ENCODE measurements at regions of chr15 and their contacts with region 1.

Region 1: GRCh38 chr15:90031231-90031791 is 30.2 kb downstream of the ZNF710 start:
- DNase-seq: peak; percentile 60 to 85 (median 82)
- H3K4me3 ChIP-seq: peak overlapping the region in 1 of 3 experiments; percentile 19
- H3K4me3 Mint-ChIP-seq: peak overlapping the region; percentile 41 to 69
- H3K27ac ChIP-seq: peak overlapping the region; percentile 76 to 97
- H3K27ac Mint-ChIP-seq: peak overlapping the region; percentile 79 to 94 (median 90)
- H3K4me1 ChIP-seq: peaks cover 80 to 85% of the 10 kb centered on the region in 2 donors
- H3K4me1 Mint-ChIP-seq: peaks cover 75% of the 10 kb centered on the region
- H3K27me3 ChIP-seq: no peaks in the 10 kb centered on the region
- H3K27me3 Mint-ChIP-seq: peaks cover 0 to 2% (median 2%) of the 10 kb centered on the region in 3 donors
- CTCF ChIP-seq: no peak

Region 2: GRCh38 chr15:89783111-89783860 is 248.0 kb before region 1 on chr15:
- intact Hi-C with region 1: no loop called
- DNase-seq: peak in 1 of 3 donors; percentile 8
- H3K4me3 ChIP-seq: no peak overlapping the region
- H3K4me3 Mint-ChIP-seq: no peak overlapping the region
- H3K27ac ChIP-seq: peak overlapping the region; percentile 3 to 21
- H3K27ac Mint-ChIP-seq: peak overlapping the region; percentile 10 to 84 (median 68)
- H3K4me1 ChIP-seq: peaks cover 27 to 39% of the 10 kb centered on the region in 2 donors
- H3K4me1 Mint-ChIP-seq: peaks cover 32% of the 10 kb centered on the region
- H3K27me3 ChIP-seq: no peaks in the 10 kb centered on the region
- H3K27me3 Mint-ChIP-seq: peaks cover 0 to 7% (median 0%) of the 10 kb centered on the region in 3 donors
- CTCF ChIP-seq: no peak

Region 3: DNA sequence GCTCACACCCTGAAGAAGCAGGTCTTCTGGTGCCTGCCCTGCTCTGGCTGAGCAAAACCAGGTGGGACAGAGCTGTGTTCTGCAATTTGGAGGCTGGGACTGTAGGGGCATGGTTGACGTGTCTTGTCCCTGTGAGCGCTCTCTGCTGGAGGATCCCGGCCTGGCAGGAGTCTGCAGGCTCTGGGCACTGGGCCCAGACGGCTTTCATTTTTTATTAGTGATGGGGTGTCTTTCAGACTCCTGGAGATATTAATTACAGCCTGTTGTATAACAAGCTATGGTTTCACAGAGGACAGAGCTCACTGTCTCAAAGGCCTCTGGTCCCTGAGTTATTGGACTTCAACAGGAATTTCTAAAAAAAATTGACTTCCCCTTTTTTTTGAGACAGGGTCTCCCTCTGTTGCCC is 59.7 kb before region 1 on chr15:
- intact Hi-C with region 1: loop called in 1 of 2 experiments (anchors 10 kb)
- DNase-seq: no peak
- H3K4me3 ChIP-seq: no peak overlapping the region
- H3K4me3 Mint-ChIP-seq: no peak overlapping the region
- H3K27ac ChIP-seq: peak overlapping the region; percentile 55 to 75
- H3K27ac Mint-ChIP-seq: peak overlapping the region; percentile 72 to 97 (median 86)
- H3K4me1 ChIP-seq: peaks cover 70 to 81% of the 10 kb centered on the region in 2 donors
- H3K4me1 Mint-ChIP-seq: peaks cover 84% of the 10 kb centered on the region
- H3K27me3 ChIP-seq: no peaks in the 10 kb centered on the region
- H3K27me3 Mint-ChIP-seq: peaks cover 0 to 2% (median 0%) of the 10 kb centered on the region in 3 donors
- CTCF ChIP-seq: peak; percentile 24

Region 4: GRCh38 chr15:90013503-90013937 is 17.8 kb before region 1 on chr15:
- intact Hi-C with region 1: loop called in 1 of 2 experiments (anchors 2 kb)
- DNase-seq: peak; percentile 51 to 80 (median 63)
- H3K4me3 ChIP-seq: peak overlapping the region in 1 of 3 experiments; percentile 64
- H3K4me3 Mint-ChIP-seq: peak overlapping the region in 1 of 2 donors; percentile 77
- H3K27ac ChIP-seq: peak overlapping the region in 1 of 2 donors; percentile 74
- H3K27ac Mint-ChIP-seq: peak overlapping the region; percentile 76 to 92 (median 79)
- H3K4me1 ChIP-seq: peaks cover 82 to 91% of the 10 kb centered on the region in 2 donors
- H3K4me1 Mint-ChIP-seq: peaks cover 82% of the 10 kb centered on the region
- H3K27me3 ChIP-seq: no peaks in the 10 kb centered on the region
- H3K27me3 Mint-ChIP-seq: peaks cover 0 to 2% (median 2%) of the 10 kb centered on the region in 3 donors
- CTCF ChIP-seq: no peak

Region 5: DNA sequence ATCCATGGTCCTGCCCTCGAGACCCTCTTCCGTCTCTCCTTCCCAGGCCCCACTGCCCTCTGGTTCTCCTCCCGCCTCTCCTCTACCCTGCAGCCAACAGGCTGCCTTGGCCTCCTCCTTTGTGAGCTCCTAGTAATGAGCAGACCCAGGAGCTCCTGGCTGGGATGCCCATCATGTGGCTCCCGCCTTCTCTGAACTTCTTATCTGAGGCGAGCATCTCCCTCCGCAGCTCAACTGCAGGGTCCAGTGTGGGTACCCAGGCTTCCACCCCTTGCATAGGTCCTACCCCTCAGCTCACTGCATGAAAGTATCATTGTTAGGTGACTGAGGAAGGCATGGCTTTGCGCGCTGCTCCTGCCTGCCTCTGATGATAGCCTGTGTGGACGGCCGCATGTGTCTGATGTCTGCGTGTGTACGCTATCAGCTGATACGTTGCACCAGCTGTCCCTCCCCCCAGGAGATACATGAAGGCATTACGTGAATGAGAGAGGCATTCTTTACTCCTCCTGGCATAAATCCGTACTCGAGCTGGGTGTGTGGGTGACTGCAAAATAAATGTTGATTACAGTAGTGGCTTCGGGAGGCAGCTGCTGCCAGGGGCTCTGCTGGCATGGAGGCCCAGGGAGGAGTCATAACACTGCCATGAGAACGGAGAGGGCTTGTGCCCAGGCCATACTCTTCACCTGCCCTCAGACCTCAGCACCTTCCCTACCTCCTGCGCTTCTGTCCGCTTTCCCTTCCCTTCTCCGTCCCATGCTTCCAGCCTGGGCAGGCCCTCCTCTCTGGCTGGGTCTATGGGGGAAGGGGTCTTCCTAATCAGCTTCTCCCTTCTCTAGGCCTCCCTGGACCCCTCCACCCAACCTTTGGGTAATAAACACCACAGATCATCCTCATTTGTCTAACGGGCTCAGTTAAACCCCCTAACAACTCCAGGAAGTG is 18.6 kb after region 1 on chr15:
- intact Hi-C with region 1: no loop called
- DNase-seq: no peak
- H3K4me3 ChIP-seq: no peak overlapping the region
- H3K4me3 Mint-ChIP-seq: no peak overlapping the region
- H3K27ac ChIP-seq: peak overlapping the region; percentile 3 to 61
- H3K27ac Mint-ChIP-seq: peak overlapping the region in 6 of 7 donors; percentile 48 to 82 (median 76)
- H3K4me1 ChIP-seq: peaks cover 54 to 65% of the 10 kb centered on the region in 2 donors
- H3K4me1 Mint-ChIP-seq: peaks cover 82% of the 10 kb centered on the region
- H3K27me3 ChIP-seq: no peaks in the 10 kb centered on the region
- H3K27me3 Mint-ChIP-seq: peaks cover 0 to 5% (median 0%) of the 10 kb centered on the region in 3 donors
- CTCF ChIP-seq: no peak

Region 6: DNA sequence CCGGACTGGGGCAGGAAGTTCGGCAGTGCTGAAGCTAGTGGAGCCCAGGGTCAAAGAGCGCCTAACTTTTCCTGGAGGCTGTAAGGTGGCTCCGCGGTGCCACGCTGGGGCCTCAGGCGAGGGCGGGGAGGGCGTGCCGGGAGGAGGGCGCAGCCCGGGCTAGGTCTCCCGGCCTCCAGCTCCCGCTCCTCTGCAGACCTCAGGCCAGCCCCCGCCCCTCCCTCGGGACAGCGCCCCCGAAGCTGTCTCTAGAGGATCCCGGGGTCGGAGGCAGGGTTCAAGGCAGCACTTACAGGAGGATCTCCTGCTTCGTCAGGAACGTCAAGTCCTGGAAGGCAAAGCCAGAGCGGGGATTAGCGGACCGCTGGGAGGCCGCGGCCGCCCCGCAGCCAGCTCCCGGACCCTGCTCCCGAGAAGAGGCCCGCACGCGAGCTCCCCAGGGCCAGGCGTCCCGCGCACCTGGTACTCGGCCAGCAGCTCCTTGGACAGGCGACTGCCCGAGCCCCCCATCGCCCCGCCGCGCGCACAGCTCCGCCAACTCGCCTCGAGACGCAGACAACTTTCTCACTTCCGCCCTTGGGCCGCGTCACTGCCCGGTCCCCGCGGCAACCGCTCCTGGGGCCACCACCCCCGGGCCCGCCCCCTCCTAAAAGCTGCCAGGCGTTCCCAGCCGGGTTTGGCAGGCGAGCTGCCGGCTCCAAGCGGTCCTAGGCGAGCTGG is 202.2 kb after region 1 on chr15 and contains the start of gene CIB1:
- intact Hi-C with region 1: no loop called
- DNase-seq: peak; percentile 97 to 98 (median 98)
- H3K4me3 ChIP-seq: peak within 1 kb of the TSS; percentile 73 to 96 (median 91)
- H3K4me3 Mint-ChIP-seq: peak within 1 kb of the TSS; percentile 80 to 90
- H3K27ac ChIP-seq: peak within 1 kb of the TSS; percentile 78 to 95
- H3K27ac Mint-ChIP-seq: peak within 1 kb of the TSS; percentile 88 to 96 (median 93)
- H3K4me1 ChIP-seq: peaks cover 41 to 47% of the 10 kb centered on the region in 2 donors
- H3K4me1 Mint-ChIP-seq: peaks cover 40% of the 10 kb centered on the region
- H3K27me3 ChIP-seq: no peaks in the 10 kb centered on the region
- H3K27me3 Mint-ChIP-seq: peaks cover 0 to 1% (median 0%) of the 10 kb centered on the region in 3 donors
- CTCF ChIP-seq: peak; percentile 66
- polyA plus RNA-seq, gene CIB1: 77.5 to 197 (median 169) TPM

Measured in CD14-positive monocyte (primary cell).